ENCODE measurements at regions of chr4 and their contacts with region 1.

Region 1: DNA sequence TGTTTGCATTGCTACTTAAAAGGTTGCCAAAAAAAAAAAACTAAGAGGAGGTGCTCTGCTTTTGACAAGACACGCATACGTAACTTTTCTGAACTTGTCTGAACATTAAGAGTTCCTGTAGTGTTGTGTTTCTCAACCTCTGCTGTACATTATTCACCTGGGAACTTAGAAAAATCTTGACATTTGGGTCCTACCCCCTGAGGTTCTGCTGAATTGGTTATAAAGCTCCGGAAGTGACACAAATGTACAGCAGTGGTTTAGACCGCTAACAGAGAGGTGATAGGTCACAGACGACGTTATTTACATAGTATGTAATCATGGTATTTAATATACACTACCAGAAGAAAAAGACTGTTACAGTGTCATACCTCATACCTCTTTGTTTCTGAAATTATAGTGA is 61.1 kb downstream of the CPEB2 start:
- DNase-seq: no peak
- H3K4me3 ChIP-seq: no peak overlapping the region
- H3K27ac ChIP-seq: peak overlapping the region; percentile 1
- H3K4me1 ChIP-seq: no peaks in the 10 kb centered on the region
- H3K27me3 ChIP-seq: no peaks in the 10 kb centered on the region
- CTCF ChIP-seq: no peak

Region 2: DNA sequence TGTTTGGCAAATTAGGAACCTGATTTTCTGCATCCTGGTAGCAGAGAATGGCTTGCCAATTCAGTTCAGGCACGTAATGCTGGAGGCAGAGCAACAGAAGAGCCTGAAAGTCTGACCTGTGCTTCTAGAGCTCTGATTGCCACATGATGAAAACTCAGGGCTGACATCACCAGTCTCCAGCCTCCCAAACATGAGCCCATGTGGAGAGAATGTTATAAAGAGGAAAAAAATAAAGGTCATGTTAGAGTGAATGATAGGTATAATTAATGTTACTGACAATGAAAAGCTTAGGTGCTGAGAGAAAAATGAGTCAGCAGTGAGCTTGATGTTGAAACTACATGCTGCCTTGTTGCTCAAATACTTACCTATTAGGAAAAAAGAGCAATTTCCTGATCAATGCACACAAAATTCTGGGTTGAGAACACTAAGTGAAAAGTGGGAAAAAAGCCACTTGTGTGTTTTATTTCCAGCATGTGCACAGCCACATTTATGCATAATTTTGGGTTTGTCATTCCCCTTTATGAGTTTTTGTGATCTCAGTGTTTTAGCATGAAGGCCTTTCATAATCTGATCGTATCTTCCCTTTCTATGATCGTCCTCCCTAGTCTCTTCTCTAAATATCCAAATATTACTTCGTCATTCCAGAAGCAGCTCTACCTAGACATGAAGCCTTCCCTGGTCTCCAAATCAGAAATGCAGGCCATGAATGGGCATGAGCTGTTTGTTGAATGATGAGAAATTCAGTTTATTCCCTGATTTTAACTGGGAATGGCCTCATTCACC is 174.4 kb before region 1 on chr4:
- CTCF ChIA-PET with region 1: no interaction called
- POLR2A ChIA-PET with region 1: no interaction called
- intact Hi-C with region 1: no loop called
- DNase-seq: no peak
- H3K4me3 ChIP-seq: no peak overlapping the region
- H3K27ac ChIP-seq: no peak overlapping the region
- H3K4me1 ChIP-seq: no peaks in the 10 kb centered on the region
- H3K27me3 ChIP-seq: no peaks in the 10 kb centered on the region
- CTCF ChIP-seq: no peak

Region 3: GRCh38 chr4:15162465-15163283 is 99.3 kb after region 1 on chr4:
- CTCF ChIA-PET with region 1: no interaction called
- POLR2A ChIA-PET with region 1: no interaction called
- intact Hi-C with region 1: loop called (anchors 5 kb)
- DNase-seq: peak; percentile 67
- H3K4me3 ChIP-seq: no peak overlapping the region
- H3K27ac ChIP-seq: peak overlapping the region; percentile 52
- H3K4me1 ChIP-seq: peaks cover 17% of the 10 kb centered on the region
- H3K27me3 ChIP-seq: no peaks in the 10 kb centered on the region
- CTCF ChIP-seq: peak; percentile 70

Region 4: GRCh38 chr4:15270201-15270600 is 206.9 kb after region 1 on chr4:
- CTCF ChIA-PET with region 1: no interaction called
- POLR2A ChIA-PET with region 1: no interaction called
- intact Hi-C with region 1: no loop called
- DNase-seq: no peak
- H3K4me3 ChIP-seq: no peak overlapping the region
- H3K27ac ChIP-seq: no peak overlapping the region
- H3K4me1 ChIP-seq: no peaks in the 10 kb centered on the region
- H3K27me3 ChIP-seq: no peaks in the 10 kb centered on the region
- CTCF ChIP-seq: no peak